CD8-positive, alpha-beta T cell (primary cell): ENCODE measurements at regions of chr6 and their contacts with region 1.

Region 1: DNA sequence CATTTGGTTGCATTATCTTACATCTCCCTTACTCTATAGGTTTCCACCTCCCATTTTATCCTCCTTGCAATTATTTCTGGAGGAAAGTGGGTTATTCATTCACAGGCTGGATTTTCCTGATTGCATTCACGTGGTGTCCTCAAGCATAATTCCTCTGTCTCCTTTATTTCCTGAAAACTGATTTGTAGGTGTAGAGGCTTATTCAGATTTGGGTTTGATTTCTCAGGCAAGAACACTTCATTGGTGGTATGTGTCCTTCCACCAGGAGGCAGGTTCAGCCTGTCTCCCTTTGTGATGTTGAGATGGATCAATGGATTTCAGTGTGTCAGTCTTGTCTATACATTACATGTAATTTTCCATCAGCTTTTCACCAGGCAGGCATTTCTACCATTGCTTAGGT is 17.3 kb downstream of the DNPH1 start:
- DNase-seq: peak in 1 of 9 experiments; percentile 22
- ATAC-seq: no peak
- H3K4me3 ChIP-seq: no peak overlapping the region
- H3K4me3 Mint-ChIP-seq: no peak overlapping the region
- H3K27ac ChIP-seq: no peak overlapping the region
- H3K27ac Mint-ChIP-seq: no peak overlapping the region
- H3K4me1 ChIP-seq: no peaks in the 10 kb centered on the region
- H3K4me1 Mint-ChIP-seq: no peaks in the 10 kb centered on the region
- H3K27me3 ChIP-seq: no peaks in the 10 kb centered on the region
- H3K27me3 Mint-ChIP-seq: no peaks in the 10 kb centered on the region
- CTCF ChIP-seq: no peak

Region 2: GRCh38 chr6:44321210-44321609 is 1109.3 kb after region 1 on chr6:
- CTCF ChIA-PET with region 1: no interaction called
- POLR2A ChIA-PET with region 1: no interaction called
- intact Hi-C with region 1: loop called in 1 of 2 experiments (anchors 5 kb)
- DNase-seq: no peak
- ATAC-seq: no peak
- H3K4me3 ChIP-seq: no peak overlapping the region
- H3K4me3 Mint-ChIP-seq: no peak overlapping the region
- H3K27ac ChIP-seq: no peak overlapping the region
- H3K27ac Mint-ChIP-seq: no peak overlapping the region
- H3K4me1 ChIP-seq: no peaks in the 10 kb centered on the region
- H3K4me1 Mint-ChIP-seq: no peaks in the 10 kb centered on the region
- H3K27me3 ChIP-seq: no peaks in the 10 kb centered on the region
- H3K27me3 Mint-ChIP-seq: peaks cover 24% of the 10 kb centered on the region
- CTCF ChIP-seq: no peak